Activated CD8-positive, alpha-beta T cell treated with anti-CD3 and anti-CD28 coated beads for 36 hours (primary cell): ENCODE measurements at regions of chr7 and their contacts with region 1.

Region 1: GRCh38 chr7:139767561-139767982 is 10.2 kb downstream of the HIPK2 start:
- DNase-seq: peak; percentile 16
- ATAC-seq: peak; percentile 87
- H3K4me3 Mint-ChIP-seq: no peak overlapping the region
- H3K27ac Mint-ChIP-seq: peak overlapping the region; percentile 92
- H3K4me1 Mint-ChIP-seq: peaks cover 74% of the 10 kb centered on the region
- H3K27me3 Mint-ChIP-seq: no peaks in the 10 kb centered on the region
- CTCF ChIP-seq: no peak

Region 2: GRCh38 chr7:139680676-139681462 is 86.7 kb before region 1 on chr7:
- CTCF ChIA-PET with region 1: no interaction called
- POLR2A ChIA-PET with region 1: interaction called, 5 read pairs
- intact Hi-C with region 1: loop called (anchors 5 kb)
- DNase-seq: peak; percentile 94
- ATAC-seq: peak; percentile 79
- H3K4me3 Mint-ChIP-seq: peak overlapping the region; percentile 39
- H3K27ac Mint-ChIP-seq: peak overlapping the region; percentile 95
- H3K4me1 Mint-ChIP-seq: peaks cover 56% of the 10 kb centered on the region
- H3K27me3 Mint-ChIP-seq: no peaks in the 10 kb centered on the region
- CTCF ChIP-seq: no peak